Ovary (tissue), 10 donors: ENCODE measurements at regions of chr7 and their contacts with region 1.

Region 1: DNA sequence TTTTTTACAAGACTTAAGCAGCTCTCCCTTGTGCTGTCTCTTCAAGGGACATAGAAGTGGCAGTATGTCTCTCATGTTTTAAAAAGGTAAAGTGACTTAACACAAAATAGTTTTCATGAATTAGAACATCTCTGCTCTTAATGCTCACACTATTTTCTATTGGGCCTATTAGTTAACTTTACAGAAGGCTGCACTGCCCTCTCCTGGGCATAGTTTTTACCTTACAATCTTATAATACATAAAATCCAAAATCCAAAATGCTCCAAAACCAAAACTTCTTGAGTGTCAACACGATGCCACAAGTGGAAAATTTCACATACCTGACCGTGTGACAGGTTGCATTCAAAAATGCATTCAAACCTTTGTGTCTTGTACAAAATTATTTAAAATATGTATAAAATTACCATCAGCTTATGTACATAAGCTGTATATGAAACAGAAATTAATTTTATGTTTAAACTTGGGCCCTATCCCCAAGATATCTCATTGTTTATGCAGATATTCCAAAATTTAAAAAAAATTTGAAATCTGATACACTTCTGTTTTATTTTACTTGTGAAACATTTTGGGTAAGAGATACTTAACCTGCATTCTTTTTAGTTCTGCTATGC is 25.8 kb downstream of the TES start:
- DNase-seq: peak in 3 of 5 donors; percentile 12 to 47 (median 40)
- H3K4me3 ChIP-seq: no peak overlapping the region
- H3K27ac ChIP-seq: no peak overlapping the region
- H3K4me1 ChIP-seq: no peaks in the 10 kb centered on the region
- H3K27me3 ChIP-seq: no peaks in the 10 kb centered on the region
- CTCF ChIP-seq: peak in 2 of 3 donors; percentile 34 to 53
- EP300 ChIP-seq: no peak
- POLR2A ChIP-seq: no peak

Region 2: DNA sequence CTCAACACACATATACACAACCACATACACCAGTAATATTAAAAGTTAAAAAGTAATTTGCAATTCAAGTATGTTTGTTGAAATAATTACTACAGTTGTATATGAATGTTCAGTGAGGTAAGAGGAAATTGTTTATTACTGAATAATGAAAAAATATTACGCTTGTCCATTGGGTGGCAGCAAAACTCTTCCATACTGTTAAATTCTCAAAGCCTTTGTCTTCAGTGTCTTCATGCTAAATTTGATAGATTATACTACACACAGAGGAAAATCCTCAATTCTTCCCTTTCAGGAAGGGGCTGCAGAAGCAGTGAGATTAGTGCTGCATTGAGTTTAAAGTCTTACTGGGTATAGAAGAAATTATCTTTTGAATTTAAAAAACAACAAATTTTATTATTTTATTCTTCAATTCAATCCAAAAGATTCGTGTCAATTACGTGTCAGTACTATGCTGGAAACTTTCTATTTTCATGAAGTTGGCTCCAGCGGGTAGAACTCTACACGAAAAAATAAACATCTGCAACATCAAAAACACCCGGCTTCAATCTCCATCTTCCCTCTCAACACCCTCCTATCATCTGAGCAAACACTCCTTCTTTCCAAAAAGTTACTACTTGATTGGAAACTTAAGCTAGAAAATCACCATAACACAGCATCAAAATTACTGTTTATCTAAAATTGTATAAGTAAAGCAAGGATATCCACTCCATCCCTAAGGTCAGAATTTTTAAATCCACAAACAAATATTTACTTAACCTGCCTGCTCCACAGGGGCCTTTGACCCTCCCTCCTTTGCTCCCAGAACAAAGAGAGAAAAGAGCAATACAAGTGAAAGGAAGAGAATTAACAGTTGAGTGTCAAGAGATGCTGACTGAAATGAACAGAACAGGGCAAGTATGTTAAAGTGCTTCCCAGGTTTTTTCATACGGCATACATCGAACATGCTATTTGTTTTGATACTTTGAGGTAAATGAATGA is 62.8 kb before region 1 on chr7:
- intact Hi-C with region 1: loop called in 1 of 4 experiments (anchors 10 kb)
- DNase-seq: no peak
- H3K4me3 ChIP-seq: no peak overlapping the region
- H3K27ac ChIP-seq: no peak overlapping the region
- H3K4me1 ChIP-seq: no peaks in the 10 kb centered on the region
- H3K27me3 ChIP-seq: no peaks in the 10 kb centered on the region
- CTCF ChIP-seq: peak in 1 of 3 donors; percentile 53
- EP300 ChIP-seq: no peak
- POLR2A ChIP-seq: no peak

Region 3: GRCh38 chr7:116185956-116186355 is 50.2 kb before region 1 on chr7:
- intact Hi-C with region 1: loop called in 1 of 4 experiments (anchors 5 kb)
- DNase-seq: no peak
- H3K4me3 ChIP-seq: no peak overlapping the region
- H3K27ac ChIP-seq: no peak overlapping the region
- H3K4me1 ChIP-seq: no peaks in the 10 kb centered on the region
- H3K27me3 ChIP-seq: no peaks in the 10 kb centered on the region
- CTCF ChIP-seq: no peak
- EP300 ChIP-seq: no peak
- POLR2A ChIP-seq: no peak

Region 4: GRCh38 chr7:116316833-116317612 is 80.9 kb after region 1 on chr7:
- intact Hi-C with region 1: no loop called
- DNase-seq: peak in 3 of 5 donors; percentile 19 to 28 (median 26)
- H3K4me3 ChIP-seq: no peak overlapping the region
- H3K27ac ChIP-seq: no peak overlapping the region
- H3K4me1 ChIP-seq: peaks cover 9% of the 10 kb centered on the region
- H3K27me3 ChIP-seq: no peaks in the 10 kb centered on the region
- CTCF ChIP-seq: no peak
- EP300 ChIP-seq: no peak
- POLR2A ChIP-seq: no peak